ENCODE measurements at regions of chr11 and their contacts with region 1.

Region 1: DNA sequence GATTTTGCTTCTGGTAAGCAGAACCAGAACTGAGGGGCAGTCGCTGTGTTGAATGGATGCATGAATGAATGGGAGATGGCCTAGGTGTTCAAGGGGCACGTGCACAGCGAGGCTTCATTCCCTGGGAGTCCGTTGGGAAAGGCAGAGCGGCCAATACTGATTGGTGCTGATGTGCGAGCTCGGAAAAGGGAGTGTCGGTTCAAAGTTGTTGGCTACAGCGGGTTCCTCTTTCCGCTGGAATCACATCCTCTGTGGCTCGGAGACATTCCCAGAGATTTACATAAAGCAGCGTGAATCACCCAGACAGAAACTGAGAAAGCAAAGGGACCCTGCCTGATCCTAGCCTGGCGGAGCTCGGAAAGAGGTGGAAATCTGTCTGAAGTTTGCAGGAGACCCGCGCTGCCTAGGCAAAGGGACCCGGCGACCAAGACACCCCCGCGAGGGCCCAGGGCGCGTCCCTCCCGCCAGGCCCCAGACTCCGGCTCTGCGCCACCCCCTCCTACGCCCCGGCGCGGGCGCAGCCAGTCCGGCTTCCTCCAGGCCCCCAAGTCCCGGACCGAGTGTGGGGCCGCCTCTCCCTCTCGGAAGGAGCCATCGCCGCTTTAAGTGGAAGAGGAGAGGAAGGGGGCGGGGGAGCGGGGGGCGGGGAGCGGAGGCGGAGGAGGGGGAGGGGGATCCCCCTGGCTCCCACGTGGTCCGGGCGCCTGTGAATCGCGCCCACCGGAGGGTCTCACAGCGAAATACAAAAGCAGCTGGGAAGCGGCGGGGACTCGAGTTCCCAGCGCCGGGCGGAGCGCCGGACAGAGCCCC is at the start of gene FJX1:
- DNase-seq: peak; percentile 54
- ATAC-seq: peak; percentile 67 to 71
- H3K4me3 ChIP-seq: peak within 1 kb of the TSS; percentile 65
- H3K27ac ChIP-seq: peak within 1 kb of the TSS; percentile 76
- H3K4me1 ChIP-seq: peaks cover 18% of the 10 kb centered on the region
- H3K27me3 ChIP-seq: peaks cover 29% of the 10 kb centered on the region
- CTCF ChIP-seq: no peak
- total RNA-seq, gene FJX1: 1.5 TPM

Region 2: DNA sequence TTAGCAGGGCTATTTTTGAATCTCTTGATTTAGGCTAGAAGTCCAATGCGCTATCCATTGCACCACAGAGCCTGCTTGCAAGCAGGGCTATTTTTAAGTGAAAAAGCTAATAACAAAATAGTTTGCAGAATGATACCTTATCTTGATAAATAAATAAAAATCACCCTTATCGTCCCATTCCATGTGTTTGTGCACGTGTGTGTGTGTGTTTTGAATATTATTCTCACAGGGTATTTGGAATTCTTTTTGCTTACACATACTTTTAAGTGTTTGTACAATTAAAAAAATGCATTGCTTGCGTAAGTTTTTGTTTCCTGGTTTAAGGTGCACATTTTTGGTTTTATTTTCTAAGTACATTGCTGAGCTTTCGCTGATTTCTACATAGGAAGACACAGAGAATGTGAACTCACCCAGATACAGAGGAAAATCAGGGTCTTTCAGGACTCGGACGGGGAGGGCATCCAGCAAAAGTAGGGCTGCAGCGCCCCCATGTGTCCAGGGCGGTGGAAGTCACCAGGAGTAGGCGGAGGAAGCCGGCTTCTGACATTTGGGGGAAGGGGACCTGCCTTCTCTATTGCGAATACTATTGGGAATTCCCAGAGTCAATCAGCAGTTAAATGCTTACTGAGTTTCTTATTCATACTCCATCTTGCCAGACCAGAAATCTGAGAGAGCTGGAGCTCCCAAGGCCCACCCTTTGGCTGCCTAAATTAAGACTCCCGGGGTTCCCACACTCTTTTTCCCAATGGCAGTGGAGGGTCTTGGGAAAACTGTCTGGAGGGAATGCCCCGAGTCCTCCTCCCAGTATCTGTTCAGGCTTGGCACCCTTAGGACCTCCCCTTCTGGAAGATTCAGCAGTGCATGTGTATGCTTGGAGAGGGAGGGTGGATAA is 225.7 kb before region 1 on chr11:
- intact Hi-C with region 1: no loop called
- DNase-seq: peak; percentile 84
- ATAC-seq: peak; percentile 88 to 89
- H3K4me3 ChIP-seq: peak overlapping the region; percentile 7
- H3K27ac ChIP-seq: peak overlapping the region; percentile 38
- H3K4me1 ChIP-seq: peaks cover 23% of the 10 kb centered on the region
- H3K27me3 ChIP-seq: no peaks in the 10 kb centered on the region
- CTCF ChIP-seq: peak; percentile 92

Region 3: GRCh38 chr11:35554491-35555437 is 63.1 kb before region 1 on chr11:
- intact Hi-C with region 1: no loop called
- DNase-seq: no peak
- ATAC-seq: no peak
- H3K4me3 ChIP-seq: no peak overlapping the region
- H3K27ac ChIP-seq: no peak overlapping the region
- H3K4me1 ChIP-seq: no peaks in the 10 kb centered on the region
- H3K27me3 ChIP-seq: no peaks in the 10 kb centered on the region
- CTCF ChIP-seq: no peak

Region 4: DNA sequence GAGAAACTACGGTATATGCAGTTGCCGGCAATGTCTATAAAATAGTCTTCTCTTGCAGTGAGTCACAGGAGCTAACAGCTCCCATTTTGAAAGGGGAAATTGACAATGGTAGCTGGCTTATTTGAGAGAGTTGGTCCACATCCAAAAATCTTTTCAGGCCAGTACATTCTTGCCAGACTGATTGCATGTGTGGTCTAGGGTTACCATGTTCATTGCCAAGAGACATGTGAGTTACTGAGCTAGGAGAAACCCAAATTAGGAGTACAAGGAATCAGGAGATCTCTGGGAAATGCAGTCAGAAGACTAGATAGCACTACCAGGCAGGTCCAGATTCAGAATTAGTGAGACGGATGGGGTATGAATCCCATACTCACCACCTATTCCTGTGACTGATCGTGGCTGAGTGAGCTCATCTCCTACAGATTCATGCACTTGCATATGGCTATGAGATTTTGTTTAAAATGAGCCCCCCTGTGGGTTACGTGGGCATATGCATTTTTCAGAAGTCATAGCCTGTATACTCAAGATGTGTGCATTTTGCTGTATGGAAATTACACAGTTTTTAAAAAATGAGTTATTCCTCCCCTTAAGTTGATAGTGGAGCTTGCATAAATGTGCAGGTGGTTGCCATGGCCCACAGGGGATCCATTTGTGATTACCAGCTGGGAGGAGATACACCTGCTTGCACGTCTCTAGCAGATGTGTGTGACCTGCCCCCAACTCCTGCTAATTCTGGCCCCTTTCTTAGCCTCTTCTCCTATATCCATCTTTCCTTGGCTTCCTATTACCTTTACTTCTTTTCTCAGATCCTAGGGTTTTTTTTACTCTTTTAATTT is 568.7 kb after region 1 on chr11:
- intact Hi-C with region 1: no loop called
- DNase-seq: no peak
- ATAC-seq: no peak
- H3K4me3 ChIP-seq: no peak overlapping the region
- H3K27ac ChIP-seq: no peak overlapping the region
- H3K4me1 ChIP-seq: no peaks in the 10 kb centered on the region
- H3K27me3 ChIP-seq: no peaks in the 10 kb centered on the region
- CTCF ChIP-seq: no peak

Region 5: DNA sequence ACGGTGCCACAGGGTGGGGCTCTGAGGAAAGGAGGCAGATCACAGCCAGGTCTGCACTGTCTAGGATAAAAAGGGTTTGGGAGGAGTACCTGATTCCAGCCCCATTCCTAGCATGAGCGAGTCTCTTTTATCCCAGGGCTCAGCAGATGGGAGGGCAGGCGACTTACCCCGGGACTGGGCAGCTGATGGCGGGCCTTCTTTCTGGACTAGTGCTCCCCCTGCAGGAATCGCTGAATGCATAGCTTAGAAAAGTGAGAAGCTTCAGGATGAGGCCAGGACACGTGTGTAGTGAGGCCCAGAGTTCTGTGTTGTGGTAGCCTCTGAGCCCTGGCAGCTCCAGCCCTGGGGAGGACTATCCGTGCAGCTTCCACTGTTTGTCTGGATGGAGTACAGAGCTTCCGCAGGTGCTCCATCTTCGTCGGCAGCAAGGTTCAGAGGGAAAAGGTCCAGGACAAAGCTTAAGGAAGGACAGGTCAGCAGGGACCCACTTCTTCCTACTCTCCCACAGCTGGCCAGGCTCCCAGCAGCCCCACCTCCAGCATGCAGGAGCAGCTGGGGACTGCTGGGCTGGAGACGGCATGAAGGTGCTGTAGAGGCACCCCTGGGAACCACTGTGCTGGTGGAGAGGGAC is 641.0 kb after region 1 on chr11:
- intact Hi-C with region 1: loop called (anchors 5 kb)
- DNase-seq: no peak
- ATAC-seq: peak; percentile 83 to 84
- H3K4me3 ChIP-seq: no peak overlapping the region
- H3K27ac ChIP-seq: no peak overlapping the region
- H3K4me1 ChIP-seq: no peaks in the 10 kb centered on the region
- H3K27me3 ChIP-seq: peaks cover 4% of the 10 kb centered on the region
- CTCF ChIP-seq: peak; percentile 61